ENCODE measurements at regions of chr16 and their contacts with region 1.

Region 1: GRCh38 chr16:72501739-72502593 is 330.0 kb upstream of the PMFBP1 start:
- DNase-seq: peak; percentile 66 to 75
- H3K4me3 ChIP-seq: no peak overlapping the region
- H3K4me3 Mint-ChIP-seq: no peak overlapping the region
- H3K27ac Mint-ChIP-seq: no peak overlapping the region
- H3K4me1 ChIP-seq: no peaks in the 10 kb centered on the region
- H3K4me1 Mint-ChIP-seq: peaks cover 7% of the 10 kb centered on the region
- H3K27me3 ChIP-seq: no peaks in the 10 kb centered on the region
- H3K27me3 Mint-ChIP-seq: no peaks in the 10 kb centered on the region
- CTCF ChIP-seq: peak; percentile 91 to 92

Region 2: DNA sequence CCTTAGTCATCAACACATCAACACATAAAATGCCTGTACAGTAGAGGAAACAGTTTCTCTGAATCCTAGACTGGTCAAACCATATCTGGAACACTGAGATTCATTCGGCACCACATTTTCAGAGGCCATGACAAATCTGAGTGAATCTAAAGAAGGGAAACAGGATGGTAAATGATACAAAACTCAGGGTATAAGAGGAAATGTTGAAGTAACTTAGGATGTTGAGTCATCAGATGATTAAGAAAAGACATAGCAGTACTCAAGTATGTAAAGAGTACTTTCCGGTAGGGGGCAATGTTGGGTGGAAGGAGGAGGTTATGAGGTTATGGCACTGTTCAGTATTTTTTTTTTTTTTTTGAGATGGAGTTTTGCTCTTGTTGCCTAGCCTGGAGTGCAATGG is 28.5 kb after region 1 on chr16:
- CTCF ChIA-PET with region 1: no interaction called
- POLR2A ChIA-PET with region 1: no interaction called
- intact Hi-C with region 1: no loop called
- DNase-seq: no peak
- H3K4me3 ChIP-seq: no peak overlapping the region
- H3K4me3 Mint-ChIP-seq: no peak overlapping the region
- H3K27ac Mint-ChIP-seq: no peak overlapping the region
- H3K4me1 ChIP-seq: no peaks in the 10 kb centered on the region
- H3K4me1 Mint-ChIP-seq: no peaks in the 10 kb centered on the region
- H3K27me3 ChIP-seq: no peaks in the 10 kb centered on the region
- H3K27me3 Mint-ChIP-seq: no peaks in the 10 kb centered on the region
- CTCF ChIP-seq: no peak

Region 3: GRCh38 chr16:72723781-72724180 is 221.8 kb after region 1 on chr16:
- CTCF ChIA-PET with region 1: no interaction called
- POLR2A ChIA-PET with region 1: no interaction called
- intact Hi-C with region 1: loop called (anchors 1 kb)
- DNase-seq: no peak
- H3K4me3 ChIP-seq: no peak overlapping the region
- H3K4me3 Mint-ChIP-seq: no peak overlapping the region
- H3K27ac Mint-ChIP-seq: no peak overlapping the region
- H3K4me1 ChIP-seq: no peaks in the 10 kb centered on the region
- H3K4me1 Mint-ChIP-seq: no peaks in the 10 kb centered on the region
- H3K27me3 ChIP-seq: no peaks in the 10 kb centered on the region
- H3K27me3 Mint-ChIP-seq: no peaks in the 10 kb centered on the region
- CTCF ChIP-seq: no peak

Region 4: GRCh38 chr16:72847187-72848027 is 345.4 kb after region 1 on chr16:
- CTCF ChIA-PET with region 1: no interaction called
- POLR2A ChIA-PET with region 1: no interaction called
- intact Hi-C with region 1: loop called (anchors 1 kb)
- DNase-seq: peak; percentile 48 to 51
- H3K4me3 ChIP-seq: no peak overlapping the region
- H3K4me3 Mint-ChIP-seq: no peak overlapping the region
- H3K27ac Mint-ChIP-seq: no peak overlapping the region
- H3K4me1 ChIP-seq: no peaks in the 10 kb centered on the region
- H3K4me1 Mint-ChIP-seq: peaks cover 3% of the 10 kb centered on the region
- H3K27me3 ChIP-seq: no peaks in the 10 kb centered on the region
- H3K27me3 Mint-ChIP-seq: no peaks in the 10 kb centered on the region
- CTCF ChIP-seq: peak; percentile 47 to 66

Region 5: DNA sequence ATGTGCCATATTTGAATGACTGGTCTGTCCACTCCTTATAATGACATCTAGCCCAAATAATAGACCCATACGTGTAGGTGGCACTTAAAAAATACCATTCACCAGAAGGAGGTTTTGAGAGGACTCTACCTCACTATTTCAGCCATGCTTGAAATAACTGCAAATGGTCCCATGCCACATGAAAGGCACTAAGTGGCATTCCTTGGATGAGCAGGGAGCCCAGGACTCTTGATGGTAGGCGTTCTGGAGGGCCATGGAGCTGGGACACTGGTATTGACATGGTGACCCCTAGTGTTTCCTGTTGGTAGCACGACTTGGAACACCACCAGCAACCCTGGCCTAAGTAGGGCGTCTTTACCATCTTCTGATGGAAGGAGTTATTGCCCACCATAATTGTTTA is 694.7 kb after region 1 on chr16:
- CTCF ChIA-PET with region 1: no interaction called
- POLR2A ChIA-PET with region 1: no interaction called
- intact Hi-C with region 1: loop called (anchors 1 kb)
- DNase-seq: peak; percentile 66 to 73
- H3K4me3 ChIP-seq: no peak overlapping the region
- H3K4me3 Mint-ChIP-seq: no peak overlapping the region
- H3K27ac Mint-ChIP-seq: no peak overlapping the region
- H3K4me1 ChIP-seq: no peaks in the 10 kb centered on the region
- H3K4me1 Mint-ChIP-seq: no peaks in the 10 kb centered on the region
- H3K27me3 ChIP-seq: no peaks in the 10 kb centered on the region
- H3K27me3 Mint-ChIP-seq: no peaks in the 10 kb centered on the region
- CTCF ChIP-seq: peak; percentile 71 to 74

Region 6: GRCh38 chr16:73527182-73527581 is 1025.2 kb after region 1 on chr16:
- CTCF ChIA-PET with region 1: no interaction called
- POLR2A ChIA-PET with region 1: no interaction called
- intact Hi-C with region 1: loop called (anchors 5 kb)
- DNase-seq: peak in 1 of 2 experiments; percentile 15
- H3K4me3 ChIP-seq: no peak overlapping the region
- H3K4me3 Mint-ChIP-seq: no peak overlapping the region
- H3K27ac Mint-ChIP-seq: no peak overlapping the region
- H3K4me1 ChIP-seq: no peaks in the 10 kb centered on the region
- H3K4me1 Mint-ChIP-seq: no peaks in the 10 kb centered on the region
- H3K27me3 ChIP-seq: no peaks in the 10 kb centered on the region
- H3K27me3 Mint-ChIP-seq: peaks cover 13% of the 10 kb centered on the region
- CTCF ChIP-seq: peak in 1 of 2 experiments; percentile 9

Measured in Caco-2 (cell line).